ENCODE measurements at regions of chr11 and their contacts with region 1.

Region 1: GRCh38 chr11:63938479-63939396 is at the start of gene NAA40:
- DNase-seq: peak; percentile 92
- H3K4me3 ChIP-seq: peak within 1 kb of the TSS; percentile 51 to 83 (median 68)
- H3K27ac ChIP-seq: peak within 1 kb of the TSS; percentile 67 to 76 (median 74)
- H3K4me1 ChIP-seq: peaks cover 0 to 24% (median 14%) of the 10 kb centered on the region in 4 donors
- H3K27me3 ChIP-seq: no peaks in the 10 kb centered on the region
- CTCF ChIP-seq: no peak
- EP300 ChIP-seq: no peak
- POLR2A ChIP-seq: no peak
- total RNA-seq, gene NAA40: 5.4 to 18.0 (median 6.8) TPM

Region 2: DNA sequence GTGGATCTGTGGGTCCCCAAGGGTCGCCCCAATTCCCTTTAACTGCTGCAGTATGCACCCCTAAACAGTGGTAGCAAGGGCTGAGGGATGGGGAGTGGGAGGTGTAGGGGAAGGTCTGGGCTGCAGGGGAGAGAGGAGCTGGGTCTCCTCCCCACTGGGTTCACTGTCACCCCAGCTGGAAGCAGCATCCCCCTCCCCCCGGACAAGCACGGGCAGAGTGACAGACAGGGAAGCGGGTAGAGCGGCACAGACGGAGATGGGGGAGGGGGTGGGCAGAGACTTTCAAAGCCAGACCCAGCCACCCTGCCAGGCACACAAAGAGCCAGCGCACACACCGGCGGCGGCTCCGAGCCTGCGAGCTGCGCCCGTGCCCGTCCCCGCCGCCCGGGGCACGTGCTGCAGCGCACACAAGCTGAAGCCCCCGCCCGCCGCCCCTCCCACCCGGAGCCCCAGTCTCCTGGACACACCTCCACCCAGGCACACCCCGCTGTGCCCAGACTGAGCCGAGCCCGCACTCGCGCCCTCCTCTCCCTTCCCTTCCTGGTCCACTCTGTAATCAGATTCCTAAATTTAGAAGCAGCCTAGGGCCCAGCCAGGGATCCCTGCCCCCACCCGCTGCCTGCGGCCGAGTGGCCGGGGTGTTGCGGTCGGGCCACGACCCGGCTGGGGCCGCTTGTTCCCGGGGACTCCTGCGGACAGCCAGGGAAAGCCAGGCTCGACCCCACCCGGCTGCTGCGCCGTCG is 20.9 kb before region 1 on chr11:
- intact Hi-C with region 1: loop called (anchors 1 kb)
- DNase-seq: peak; percentile 82
- H3K4me3 ChIP-seq: peak overlapping the region; percentile 23 to 58 (median 51)
- H3K27ac ChIP-seq: peak overlapping the region; percentile 79 to 92 (median 84)
- H3K4me1 ChIP-seq: peaks cover 2 to 58% (median 54%) of the 10 kb centered on the region in 4 donors
- H3K27me3 ChIP-seq: no peaks in the 10 kb centered on the region
- CTCF ChIP-seq: no peak
- EP300 ChIP-seq: no peak
- POLR2A ChIP-seq: no peak

Region 3: DNA sequence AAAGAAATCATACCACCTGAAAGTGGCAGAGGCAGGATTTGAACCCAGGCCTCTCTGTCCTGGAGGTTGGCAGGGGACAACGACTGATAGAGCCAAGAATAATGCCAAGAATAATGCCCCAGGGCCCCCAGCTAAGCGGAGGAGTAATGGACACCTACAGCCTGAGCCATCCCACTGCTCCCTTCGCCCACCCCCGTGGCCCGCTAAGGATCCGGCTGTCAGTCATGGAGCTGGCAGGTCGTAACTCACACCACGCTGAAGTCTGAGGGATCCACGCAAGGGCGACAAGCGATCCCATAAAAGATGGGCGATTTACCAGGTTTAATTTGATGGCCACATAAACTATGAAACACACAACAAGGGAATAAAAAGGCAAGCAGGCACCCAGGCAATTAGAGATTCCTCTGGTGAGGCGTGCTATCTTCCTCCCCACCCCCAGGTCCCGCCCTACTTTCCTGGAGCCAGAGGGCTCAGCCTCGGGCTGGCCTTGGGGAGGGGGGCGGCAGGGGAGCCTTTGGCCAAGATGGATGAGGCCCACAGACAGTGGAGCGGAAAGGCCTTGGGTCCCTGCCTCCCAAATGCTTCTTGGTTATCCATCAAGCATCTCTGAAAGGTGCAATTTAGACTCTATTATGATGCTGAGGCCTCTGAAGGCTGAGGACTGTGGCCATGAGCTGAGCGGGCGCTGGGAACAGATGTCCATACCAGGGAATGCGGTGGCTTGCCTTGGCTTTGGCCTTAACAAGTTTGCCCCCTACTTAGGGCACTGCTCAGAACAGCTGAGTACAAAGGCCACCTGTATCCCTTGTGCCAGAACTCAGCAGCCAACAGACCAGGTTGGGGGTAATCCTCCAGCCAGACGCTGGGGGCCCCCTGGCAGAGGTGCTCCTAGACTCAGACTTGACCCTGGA is 172.0 kb after region 1 on chr11:
- intact Hi-C with region 1: no loop called
- DNase-seq: no peak
- H3K4me3 ChIP-seq: no peak overlapping the region
- H3K27ac ChIP-seq: no peak overlapping the region
- H3K4me1 ChIP-seq: peaks cover 0 to 22% (median 8%) of the 10 kb centered on the region in 4 donors
- H3K27me3 ChIP-seq: no peaks in the 10 kb centered on the region
- CTCF ChIP-seq: no peak
- EP300 ChIP-seq: no peak
- POLR2A ChIP-seq: no peak

Region 4: DNA sequence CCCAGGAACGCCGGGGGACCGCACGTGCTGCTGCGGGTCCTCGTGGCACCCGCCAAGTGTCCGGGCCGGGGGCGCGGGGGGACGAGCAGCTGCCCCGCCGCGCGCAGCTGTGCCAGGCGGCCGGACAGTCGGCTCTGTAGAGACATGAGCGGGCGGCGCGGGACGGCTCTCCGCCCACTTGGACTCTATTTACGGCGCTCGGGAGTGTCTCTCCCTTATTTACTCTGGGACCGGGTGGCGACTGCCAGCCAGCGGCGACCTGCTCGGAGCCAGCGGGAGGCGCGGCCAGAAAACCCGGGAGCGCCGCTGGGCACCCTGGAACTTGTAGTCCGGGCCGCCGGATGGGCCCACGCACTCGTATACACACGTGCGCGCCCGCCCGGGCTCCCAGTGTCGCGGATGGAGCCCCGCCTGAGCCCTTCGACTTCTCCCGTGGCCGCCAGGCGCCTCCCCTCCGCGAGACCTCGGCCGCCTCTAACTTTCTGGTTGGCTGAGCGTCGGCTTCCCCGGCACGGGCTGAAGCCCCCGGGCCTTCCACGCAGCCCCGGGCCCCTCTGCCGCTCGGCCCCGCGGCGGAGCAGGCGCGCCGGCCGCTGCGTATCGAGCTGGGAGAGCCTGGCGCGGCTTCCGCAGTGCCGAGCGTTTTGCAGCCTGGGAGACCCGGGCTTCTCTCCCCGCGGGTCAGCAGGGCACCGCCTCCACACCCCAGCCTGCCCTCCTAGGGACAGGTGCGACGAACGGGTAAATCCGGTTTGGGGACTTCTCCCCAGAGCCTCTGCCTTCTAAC is 227.3 kb after region 1 on chr11 and contains the start of gene MACROD1:
- intact Hi-C with region 1: no loop called
- DNase-seq: peak; percentile 93
- H3K4me3 ChIP-seq: peak within 1 kb of the TSS; percentile 65 to 85 (median 79)
- H3K27ac ChIP-seq: peak within 1 kb of the TSS; percentile 72 to 78 (median 77)
- H3K4me1 ChIP-seq: peaks cover 0 to 23% (median 16%) of the 10 kb centered on the region in 4 donors
- H3K27me3 ChIP-seq: no peaks in the 10 kb centered on the region
- CTCF ChIP-seq: no peak
- EP300 ChIP-seq: no peak
- POLR2A ChIP-seq: no peak
- total RNA-seq, gene MACROD1: 23.3 to 33.9 (median 25.8) TPM

Region 5: GRCh38 chr11:64396079-64396591 is 457.4 kb after region 1 on chr11:
- intact Hi-C with region 1: no loop called
- DNase-seq: no peak
- H3K4me3 ChIP-seq: no peak overlapping the region
- H3K27ac ChIP-seq: peak overlapping the region in 2 of 4 donors; percentile 2 to 27
- H3K4me1 ChIP-seq: peaks cover 0 to 25% (median 20%) of the 10 kb centered on the region in 4 donors
- H3K27me3 ChIP-seq: no peaks in the 10 kb centered on the region
- CTCF ChIP-seq: no peak
- EP300 ChIP-seq: no peak
- POLR2A ChIP-seq: no peak